K562 (cell line): ENCODE measurements at regions of chr14 and their contacts with region 1.

Region 1: DNA sequence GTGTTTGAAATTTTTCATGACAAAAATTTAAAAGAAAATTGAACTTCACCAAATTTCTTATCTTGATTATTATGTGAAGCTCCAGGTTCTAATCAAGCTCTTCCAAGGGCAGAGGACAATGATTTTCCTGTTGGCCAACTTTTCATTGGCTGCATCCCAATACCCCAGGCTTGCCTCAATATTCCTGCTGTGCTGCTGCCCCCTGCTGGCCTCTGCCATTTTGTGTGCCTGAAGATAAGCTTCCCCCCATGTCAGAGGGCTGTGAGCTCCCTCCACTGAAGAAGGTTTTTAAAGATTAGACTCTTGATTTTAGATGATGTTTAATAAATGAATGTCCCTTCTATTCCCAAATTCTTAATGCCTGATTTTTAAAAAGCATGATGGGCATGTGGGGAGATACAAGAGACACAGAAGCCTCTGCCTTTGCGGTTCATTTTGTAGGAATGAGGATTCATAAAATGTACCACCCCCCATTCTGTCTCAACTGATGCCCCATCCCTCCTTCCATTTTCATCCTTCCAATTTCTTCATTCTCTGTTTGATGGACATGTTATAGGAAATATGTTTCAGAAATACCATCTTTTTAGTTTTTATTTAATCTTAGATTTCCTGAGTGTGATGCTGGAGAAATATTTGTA is 76.7 kb upstream of the RGS6 start:
- DNase-seq: peak; percentile 44 to 69 (median 52)
- ATAC-seq: peak; percentile 88
- H3K4me3 ChIP-seq: no peak overlapping the region
- H3K27ac ChIP-seq: no peak overlapping the region
- H3K4me1 ChIP-seq: no peaks in the 10 kb centered on the region; a peak in 1 of 5 replicates
- H3K27me3 ChIP-seq: no peaks in the 10 kb centered on the region
- CTCF ChIP-seq: peak; percentile 59 to 70 (median 65)
- EP300 ChIP-seq: no peak
- POLR2A ChIP-seq: no peak
- RAD21 ChIP-seq: peak; percentile 36 to 65; a peak in 3 of 4 replicates

Region 2: GRCh38 chr14:71138448-71139293 is 716.8 kb before region 1 on chr14:
- CTCF ChIA-PET with region 1: no interaction called
- POLR2A ChIA-PET with region 1: no interaction called
- in situ Hi-C with region 1: no loop called
- intact Hi-C with region 1: loop called (anchors 5 kb)
- DNase-seq: peak; percentile 60 to 71 (median 66)
- ATAC-seq: peak; percentile 93
- H3K4me3 ChIP-seq: no peak overlapping the region
- H3K27ac ChIP-seq: no peak overlapping the region
- H3K4me1 ChIP-seq: peaks cover 0 to 8% of the 10 kb centered on the region in 2 experiments; a peak in 4 of 5 replicates
- H3K27me3 ChIP-seq: no peaks in the 10 kb centered on the region
- CTCF ChIP-seq: peak; percentile 70 to 80 (median 71)
- EP300 ChIP-seq: no peak
- POLR2A ChIP-seq: no peak
- RAD21 ChIP-seq: peak; percentile 71 to 87

Region 3: GRCh38 chr14:71720978-71721624 is 134.4 kb before region 1 on chr14:
- CTCF ChIA-PET with region 1: no interaction called
- POLR2A ChIA-PET with region 1: no interaction called
- in situ Hi-C with region 1: loop called (anchors 10 kb)
- intact Hi-C with region 1: loop called (anchors 5 kb)
- DNase-seq: peak; percentile 29 to 71 (median 42)
- ATAC-seq: peak; percentile 94
- H3K4me3 ChIP-seq: no peak overlapping the region
- H3K27ac ChIP-seq: no peak overlapping the region
- H3K4me1 ChIP-seq: no peaks in the 10 kb centered on the region
- H3K27me3 ChIP-seq: no peaks in the 10 kb centered on the region
- CTCF ChIP-seq: peak; percentile 55 to 76 (median 69); a peak in 5 of 6 replicates
- EP300 ChIP-seq: no peak
- POLR2A ChIP-seq: no peak
- RAD21 ChIP-seq: peak; percentile 56 to 78